Ascending aorta (tissue), 2 donors: ENCODE measurements at regions of chr1 and their contacts with region 1.

Region 1: DNA sequence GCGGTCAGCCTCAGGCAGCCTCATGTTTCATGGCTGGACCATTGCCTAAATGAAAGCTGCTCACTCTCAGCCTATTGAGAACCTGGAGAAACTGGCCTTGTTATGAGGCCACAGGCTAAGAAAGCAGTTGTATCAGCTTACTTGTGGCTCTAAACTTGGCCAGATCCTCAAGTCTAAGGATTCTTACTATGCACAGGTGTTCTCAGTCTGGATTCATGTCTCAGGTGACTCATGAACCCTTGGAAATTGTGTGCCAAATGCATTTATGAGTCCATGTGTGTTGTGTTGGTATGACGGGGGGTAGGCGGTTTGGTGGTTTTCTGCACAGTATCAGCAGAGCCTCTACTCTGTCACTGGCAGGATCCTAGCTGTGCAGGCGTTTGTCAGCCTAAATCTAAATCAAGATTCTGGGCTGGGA is 90.4 kb downstream of the ROR1 start:
- DNase-seq: no peak
- H3K4me3 ChIP-seq: no peak overlapping the region
- H3K27ac ChIP-seq: no peak overlapping the region
- H3K4me1 ChIP-seq: peaks cover 0 to 45% of the 10 kb centered on the region in 2 donors
- H3K27me3 ChIP-seq: no peaks in the 10 kb centered on the region
- CTCF ChIP-seq: no peak

Region 2: GRCh38 chr1:63732666-63733065 is 131.6 kb before region 1 on chr1:
- intact Hi-C with region 1: no loop called
- DNase-seq: no peak
- H3K4me3 ChIP-seq: no peak overlapping the region
- H3K27ac ChIP-seq: peak overlapping the region in 1 of 2 donors; percentile 31
- H3K4me1 ChIP-seq: peaks cover 0 to 4% of the 10 kb centered on the region in 2 donors
- H3K27me3 ChIP-seq: no peaks in the 10 kb centered on the region
- CTCF ChIP-seq: no peak

Region 3: GRCh38 chr1:63821091-63822005 is 42.9 kb before region 1 on chr1:
- intact Hi-C with region 1: loop called (anchors 5 kb)
- DNase-seq: peak in 1 of 2 donors; percentile 67
- H3K4me3 ChIP-seq: peak overlapping the region in 1 of 2 donors; percentile 14
- H3K27ac ChIP-seq: peak overlapping the region; percentile 38 to 51
- H3K4me1 ChIP-seq: peaks cover 4 to 38% of the 10 kb centered on the region in 2 donors
- H3K27me3 ChIP-seq: no peaks in the 10 kb centered on the region
- CTCF ChIP-seq: no peak